ENCODE measurements at regions of chr7 and their contacts with region 1.

Region 1: DNA sequence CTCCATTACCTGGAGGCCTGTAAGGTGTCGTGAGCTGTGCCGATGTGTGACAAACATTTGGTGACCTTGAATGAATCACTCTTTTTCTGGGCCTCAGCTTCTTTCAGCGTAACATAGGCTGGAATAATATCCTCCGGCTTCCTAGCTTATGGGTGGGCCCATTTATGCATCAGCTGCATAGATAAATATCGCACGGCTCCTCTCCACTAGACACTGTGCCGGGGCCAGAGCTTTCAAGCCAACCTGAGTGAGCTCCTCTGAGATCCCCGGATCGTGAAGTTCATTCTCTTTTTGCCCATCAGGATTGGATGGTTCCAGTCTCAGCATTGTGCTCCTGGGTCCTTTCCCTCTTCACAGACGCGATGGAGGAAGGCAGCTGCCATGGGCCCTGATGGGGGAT is 574.3 kb upstream of the FOXK1 start:
- DNase-seq: no peak
- ATAC-seq: no peak
- H3K4me3 ChIP-seq: no peak overlapping the region
- H3K27ac ChIP-seq: no peak overlapping the region
- H3K4me1 ChIP-seq: no peaks in the 10 kb centered on the region
- H3K27me3 ChIP-seq: no peaks in the 10 kb centered on the region
- CTCF ChIP-seq: no peak

Region 2: DNA sequence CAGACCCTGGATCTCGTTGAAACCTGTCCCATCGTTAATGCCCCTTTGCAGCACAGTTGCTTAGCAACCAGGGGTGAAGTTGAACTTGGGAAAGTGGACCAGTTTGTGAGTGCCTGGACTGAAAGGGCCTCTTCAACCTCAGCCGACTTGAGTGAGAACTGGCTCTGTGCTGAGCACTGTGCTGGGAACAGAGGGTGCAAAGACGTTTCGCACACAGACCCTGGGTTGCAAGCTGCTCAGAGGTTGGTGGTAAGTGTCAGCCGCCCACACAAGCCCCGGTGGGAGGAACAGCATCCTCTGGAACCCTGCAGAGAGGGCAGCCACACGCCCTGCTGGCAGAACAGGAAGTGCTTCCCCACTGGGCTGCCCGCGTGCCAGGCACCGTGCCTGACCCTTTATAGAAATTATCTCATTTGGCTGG is 1153.4 kb before region 1 on chr7:
- CTCF ChIA-PET with region 1: no interaction called
- POLR2A ChIA-PET with region 1: no interaction called
- in situ Hi-C with region 1: no loop called
- intact Hi-C with region 1: no loop called
- DNase-seq: no peak
- ATAC-seq: no peak
- H3K4me3 ChIP-seq: no peak overlapping the region
- H3K27ac ChIP-seq: no peak overlapping the region
- H3K4me1 ChIP-seq: no peaks in the 10 kb centered on the region
- H3K27me3 ChIP-seq: peaks cover 9% of the 10 kb centered on the region; the same call in 1 of the 2 replicates
- CTCF ChIP-seq: no peak

Region 3: GRCh38 chr7:4450475-4450874 is 342.6 kb after region 1 on chr7:
- CTCF ChIA-PET with region 1: interaction called, 11 read pairs
- POLR2A ChIA-PET with region 1: no interaction called
- in situ Hi-C with region 1: no loop called
- intact Hi-C with region 1: no loop called
- DNase-seq: no peak
- ATAC-seq: no peak
- H3K4me3 ChIP-seq: no peak overlapping the region
- H3K27ac ChIP-seq: no peak overlapping the region
- H3K4me1 ChIP-seq: no peaks in the 10 kb centered on the region
- H3K27me3 ChIP-seq: peaks cover 2% of the 10 kb centered on the region; the same call in 1 of the 2 replicates
- CTCF ChIP-seq: no peak